CD14-positive monocyte (primary cell): ENCODE measurements at regions of chr15 and their contacts with region 1.

Region 1: DNA sequence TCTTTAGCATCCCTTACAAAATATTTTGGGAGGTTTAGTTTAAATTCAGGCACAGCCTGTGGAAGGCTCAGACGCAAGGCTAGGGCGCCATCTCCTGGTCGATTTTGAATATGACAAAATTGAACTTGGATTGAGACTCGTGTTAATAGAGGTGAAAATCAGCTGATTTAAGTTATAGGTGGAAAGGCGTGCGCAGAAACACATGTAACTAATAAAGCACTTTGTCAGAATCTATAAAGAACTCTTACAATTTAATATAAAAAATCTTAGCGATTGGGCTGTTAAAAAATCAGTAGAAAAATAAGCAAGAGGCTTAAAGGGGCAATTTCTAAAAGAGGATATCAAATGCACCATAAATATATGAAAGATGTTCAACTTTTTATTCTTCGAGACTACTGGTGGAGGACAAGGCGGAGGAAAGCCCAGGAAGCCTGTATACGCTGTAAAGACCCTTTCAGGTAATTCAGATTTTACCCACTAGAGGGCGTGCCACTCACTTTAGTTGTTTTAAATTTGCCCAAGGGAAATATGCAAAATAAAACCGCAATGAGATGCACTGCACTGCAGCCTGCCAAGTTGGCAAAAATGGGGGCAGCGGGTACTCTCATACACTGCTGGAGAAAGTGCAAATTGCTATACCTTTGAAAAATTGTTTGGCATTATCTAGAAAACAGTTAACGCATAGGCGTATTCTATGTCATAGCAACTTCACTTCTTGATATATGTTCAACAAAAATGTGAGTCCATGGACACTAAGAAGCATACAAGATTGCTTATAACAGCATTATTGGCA is 64.7 kb downstream of the SLC30A4 start:
- DNase-seq: peak; percentile 82 to 88 (median 83)
- H3K4me3 ChIP-seq: peak overlapping the region; percentile 1 to 68 (median 32)
- H3K4me3 Mint-ChIP-seq: peak overlapping the region; percentile 70 to 86
- H3K27ac ChIP-seq: peak overlapping the region in 1 of 2 donors; percentile 90
- H3K27ac Mint-ChIP-seq: peak overlapping the region; percentile 94 to 100 (median 97)
- H3K4me1 ChIP-seq: peaks cover 47 to 49% of the 10 kb centered on the region in 2 donors
- H3K4me1 Mint-ChIP-seq: peaks cover 51% of the 10 kb centered on the region
- H3K27me3 ChIP-seq: no peaks in the 10 kb centered on the region
- H3K27me3 Mint-ChIP-seq: peaks cover 12 to 21% (median 14%) of the 10 kb centered on the region in 3 donors
- CTCF ChIP-seq: peak; percentile 84

Region 2: GRCh38 chr15:44719293-44719999 is 738.4 kb before region 1 on chr15:
- intact Hi-C with region 1: loop called (anchors 5 to 10 kb)
- DNase-seq: peak; percentile 44 to 60 (median 46)
- H3K4me3 ChIP-seq: no peak overlapping the region
- H3K4me3 Mint-ChIP-seq: no peak overlapping the region
- H3K27ac ChIP-seq: peak overlapping the region; percentile 50 to 66
- H3K27ac Mint-ChIP-seq: peak overlapping the region; percentile 79 to 99 (median 91)
- H3K4me1 ChIP-seq: peaks cover 69 to 90% of the 10 kb centered on the region in 2 donors
- H3K4me1 Mint-ChIP-seq: peaks cover 84% of the 10 kb centered on the region
- H3K27me3 ChIP-seq: no peaks in the 10 kb centered on the region
- H3K27me3 Mint-ChIP-seq: peaks cover 0 to 2% (median 0%) of the 10 kb centered on the region in 3 donors
- CTCF ChIP-seq: no peak

Region 3: DNA sequence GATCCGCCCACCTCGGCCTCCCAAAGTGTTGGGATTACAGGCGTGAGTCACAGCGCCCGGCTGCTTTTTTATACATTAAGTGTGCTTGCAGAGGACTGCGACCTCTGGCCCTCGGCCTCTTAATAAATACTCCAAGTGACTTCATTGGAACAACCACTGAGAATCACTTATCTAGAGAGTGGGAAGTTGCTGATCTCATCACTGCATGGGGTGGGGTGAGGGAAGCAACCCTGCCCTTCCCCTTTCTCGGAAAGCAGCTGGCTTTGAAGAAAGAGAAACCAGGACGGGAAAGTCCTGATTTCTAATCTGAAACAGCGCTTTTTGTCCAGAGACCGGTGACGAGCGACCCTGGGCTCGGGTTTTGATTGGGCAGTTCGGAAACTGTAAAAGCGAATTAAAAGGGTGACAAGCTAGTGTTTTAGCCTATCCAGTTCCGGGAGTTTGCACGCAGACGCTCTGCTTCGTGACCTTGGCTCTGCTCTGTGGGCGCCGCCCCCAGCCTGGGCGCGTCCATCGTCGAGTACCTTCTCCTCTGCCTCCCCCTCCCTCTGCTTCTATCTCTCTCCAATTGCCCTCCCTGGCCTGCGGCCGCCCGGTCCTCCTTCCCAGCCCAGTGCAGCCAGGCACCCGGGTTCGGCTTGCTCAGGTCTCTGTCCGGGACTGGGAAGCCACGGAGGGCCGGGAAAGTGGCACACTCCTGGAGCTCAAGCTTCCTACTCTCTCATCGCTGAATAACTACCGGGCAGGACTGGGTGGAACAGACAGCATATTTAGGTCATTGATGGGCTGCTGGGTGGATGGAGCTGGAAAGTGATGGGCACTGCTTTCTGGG is 729.0 kb before region 1 on chr15:
- intact Hi-C with region 1: loop called (anchors 5 to 10 kb)
- DNase-seq: peak; percentile 99
- H3K4me3 ChIP-seq: peak overlapping the region; percentile 78 to 93 (median 80)
- H3K4me3 Mint-ChIP-seq: peak overlapping the region; percentile 96 to 98
- H3K27ac ChIP-seq: peak overlapping the region; percentile 90 to 99
- H3K27ac Mint-ChIP-seq: peak overlapping the region; percentile 99 to 100 (median 100)
- H3K4me1 ChIP-seq: peaks cover 58 to 68% of the 10 kb centered on the region in 2 donors
- H3K4me1 Mint-ChIP-seq: peaks cover 63% of the 10 kb centered on the region
- H3K27me3 ChIP-seq: no peaks in the 10 kb centered on the region
- H3K27me3 Mint-ChIP-seq: peaks cover 0 to 7% (median 0%) of the 10 kb centered on the region in 3 donors
- CTCF ChIP-seq: no peak

Region 4: GRCh38 chr15:45187894-45188830 is 269.7 kb before region 1 on chr15 and contains the start of gene SHF:
- intact Hi-C with region 1: no loop called
- DNase-seq: peak; percentile 14 to 68 (median 29)
- H3K4me3 ChIP-seq: peak within 1 kb of the TSS; percentile 33 to 76 (median 38)
- H3K4me3 Mint-ChIP-seq: peak within 1 kb of the TSS; percentile 72 to 88
- H3K27ac ChIP-seq: no peak within 1 kb of the TSS
- H3K27ac Mint-ChIP-seq: peak within 1 kb of the TSS in 4 of 7 donors; percentile 2 to 68 (median 56)
- H3K4me1 ChIP-seq: peaks cover 12 to 18% of the 10 kb centered on the region in 2 donors
- H3K4me1 Mint-ChIP-seq: peaks cover 14% of the 10 kb centered on the region
- H3K27me3 ChIP-seq: peaks cover 4 to 24% of the 10 kb centered on the region in 2 donors
- H3K27me3 Mint-ChIP-seq: peaks cover 25 to 33% (median 32%) of the 10 kb centered on the region in 3 donors
- CTCF ChIP-seq: no peak
- polyA plus RNA-seq, gene SHF: 0.58 to 0.70 (median 0.67) TPM

Region 5: DNA sequence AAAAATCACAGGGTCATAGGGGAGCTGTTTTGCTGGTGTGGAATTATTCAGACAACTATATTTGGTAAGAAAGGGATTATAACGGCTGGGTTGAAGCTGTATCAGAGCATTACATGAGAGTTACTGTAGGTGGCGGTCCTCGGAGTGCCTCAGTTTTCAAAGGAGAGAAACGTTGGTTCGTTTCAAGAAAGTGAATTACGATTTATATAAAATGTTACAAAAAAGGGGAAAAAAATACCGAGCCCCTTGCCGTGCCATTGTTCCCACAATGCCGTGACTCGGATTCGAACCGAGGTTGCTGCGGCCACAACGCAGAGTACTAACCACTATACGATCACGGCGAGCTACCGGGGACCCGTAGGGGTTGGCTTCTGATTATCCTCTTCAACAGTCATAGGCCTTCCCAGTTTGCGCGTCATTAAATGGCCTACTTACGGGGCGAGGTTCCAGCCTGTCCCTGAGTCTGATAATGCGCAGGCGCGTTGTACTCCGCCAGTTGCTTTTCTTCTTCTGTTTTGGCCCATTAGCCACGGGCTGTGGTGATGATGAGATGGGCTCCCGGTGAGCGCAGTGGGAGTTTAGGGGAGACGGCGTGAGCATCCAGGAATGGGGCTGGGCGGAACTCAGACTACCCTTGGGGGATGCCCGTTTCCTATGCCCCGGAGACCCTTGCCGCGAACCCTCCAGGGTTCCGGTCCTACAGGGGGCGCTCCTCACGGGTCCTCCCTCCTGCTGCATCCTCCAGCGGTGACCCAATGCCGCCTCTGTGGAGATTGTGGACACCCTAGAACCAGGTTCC is 259.3 kb before region 1 on chr15:
- intact Hi-C with region 1: loop called in 1 of 2 experiments (anchors 5 kb)
- DNase-seq: peak; percentile 98 to 99 (median 98)
- H3K4me3 ChIP-seq: peak overlapping the region; percentile 68 to 95 (median 91)
- H3K4me3 Mint-ChIP-seq: peak overlapping the region in 1 of 2 donors; percentile 88
- H3K27ac ChIP-seq: peak overlapping the region; percentile 97 to 99
- H3K27ac Mint-ChIP-seq: peak overlapping the region in 1 of 7 donors; percentile 82
- H3K4me1 ChIP-seq: peaks cover 34 to 40% of the 10 kb centered on the region in 2 donors
- H3K4me1 Mint-ChIP-seq: peaks cover 28% of the 10 kb centered on the region
- H3K27me3 ChIP-seq: no peaks in the 10 kb centered on the region
- H3K27me3 Mint-ChIP-seq: peaks cover 0 to 8% (median 2%) of the 10 kb centered on the region in 3 donors
- CTCF ChIP-seq: peak; percentile 67

Region 6: DNA sequence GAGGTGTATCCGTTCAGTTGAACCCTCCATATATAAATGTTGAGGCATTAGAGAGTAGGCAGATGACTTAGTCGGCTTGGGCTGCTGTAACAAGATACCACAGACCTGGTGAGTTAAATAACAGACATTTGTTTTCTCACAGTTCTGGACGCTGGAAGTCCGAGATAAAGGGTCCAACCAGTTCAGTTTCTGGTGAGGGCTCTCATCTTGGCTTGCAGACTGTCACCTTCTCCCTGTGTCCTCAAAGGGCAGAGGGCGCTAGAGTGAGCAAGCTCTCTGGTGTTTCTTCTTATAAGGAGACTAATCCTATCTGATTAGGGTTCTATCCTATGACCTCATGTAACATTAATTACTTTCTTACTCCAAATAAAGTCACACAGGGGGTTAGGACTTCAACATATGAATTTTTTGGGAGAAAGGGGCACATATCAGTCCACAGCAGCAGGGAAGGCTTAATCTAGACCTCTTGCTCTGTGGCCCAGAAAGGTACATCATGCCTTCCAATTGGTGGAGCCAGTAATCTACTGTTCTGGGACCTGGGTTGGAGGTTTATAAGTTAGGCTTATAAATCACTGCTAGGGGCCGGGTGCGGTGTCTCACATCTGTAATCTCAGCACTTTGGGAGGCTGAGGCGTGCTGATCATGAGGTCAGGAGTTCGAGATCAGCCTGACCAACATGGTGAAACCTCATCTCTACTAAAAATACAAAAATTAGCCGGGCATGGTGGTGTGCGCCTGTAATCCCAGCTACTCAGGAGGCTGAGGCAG is 232.1 kb before region 1 on chr15:
- intact Hi-C with region 1: no loop called
- DNase-seq: no peak
- H3K4me3 ChIP-seq: no peak overlapping the region
- H3K4me3 Mint-ChIP-seq: no peak overlapping the region
- H3K27ac ChIP-seq: no peak overlapping the region
- H3K27ac Mint-ChIP-seq: no peak overlapping the region
- H3K4me1 ChIP-seq: no peaks in the 10 kb centered on the region
- H3K4me1 Mint-ChIP-seq: no peaks in the 10 kb centered on the region
- H3K27me3 ChIP-seq: peaks cover 2 to 11% of the 10 kb centered on the region in 2 donors
- H3K27me3 Mint-ChIP-seq: peaks cover 6 to 14% (median 14%) of the 10 kb centered on the region in 3 donors
- CTCF ChIP-seq: no peak

Region 7: GRCh38 chr15:45424429-45424828 is 33.4 kb before region 1 on chr15:
- intact Hi-C with region 1: loop called in 1 of 2 experiments (anchors 5 kb)
- DNase-seq: no peak
- H3K4me3 ChIP-seq: no peak overlapping the region
- H3K4me3 Mint-ChIP-seq: no peak overlapping the region
- H3K27ac ChIP-seq: no peak overlapping the region
- H3K27ac Mint-ChIP-seq: peak overlapping the region in 1 of 7 donors; percentile 61
- H3K4me1 ChIP-seq: no peaks in the 10 kb centered on the region
- H3K4me1 Mint-ChIP-seq: peaks cover 3% of the 10 kb centered on the region
- H3K27me3 ChIP-seq: no peaks in the 10 kb centered on the region
- H3K27me3 Mint-ChIP-seq: peaks cover 0 to 3% (median 0%) of the 10 kb centered on the region in 3 donors
- CTCF ChIP-seq: no peak

Region 8: DNA sequence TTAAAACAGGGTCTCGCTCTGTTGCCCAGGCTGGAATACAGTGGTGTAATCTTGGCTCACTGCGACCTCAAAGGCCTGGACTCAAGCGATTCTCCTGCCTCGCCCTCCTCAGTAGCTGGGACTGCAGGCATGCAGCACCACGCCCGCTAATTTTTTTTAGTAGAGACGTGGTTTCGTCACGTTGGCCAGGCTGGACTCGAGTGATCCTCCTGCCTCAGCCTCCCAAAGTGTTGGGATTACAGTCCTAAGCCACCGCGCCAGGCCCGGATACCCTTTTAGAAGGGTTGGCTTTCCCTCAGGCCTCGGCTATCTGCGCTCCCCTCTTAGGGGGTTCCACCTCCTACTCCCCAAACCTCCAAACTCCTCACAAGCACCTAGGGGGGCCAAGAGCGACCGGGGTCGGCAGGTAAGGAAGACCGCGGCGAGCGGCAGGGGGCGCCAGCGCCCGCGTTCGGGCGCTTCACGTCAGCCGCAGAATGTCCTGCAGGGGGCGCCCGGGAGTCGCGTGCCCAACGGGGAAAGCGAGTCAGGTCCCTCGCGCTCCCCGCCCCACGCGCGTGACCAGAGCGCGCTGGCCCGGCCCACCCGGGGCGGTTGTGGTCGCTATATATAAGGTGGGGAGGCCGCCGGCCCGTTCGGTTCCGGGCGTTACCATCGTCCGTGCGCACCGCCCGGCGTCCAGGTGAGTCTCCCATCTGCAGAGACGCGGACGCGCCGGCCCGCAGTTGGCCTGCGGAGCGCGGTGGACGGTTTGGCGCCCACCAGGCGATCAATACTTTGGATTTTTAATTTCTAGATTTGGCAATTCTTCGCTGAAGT is 27.7 kb before region 1 on chr15:
- intact Hi-C with region 1: loop called (anchors 1 kb)
- DNase-seq: peak; percentile 74 to 89 (median 81)
- H3K4me3 ChIP-seq: peak overlapping the region; percentile 9 to 66 (median 17)
- H3K4me3 Mint-ChIP-seq: peak overlapping the region; percentile 75 to 82
- H3K27ac ChIP-seq: no peak overlapping the region
- H3K27ac Mint-ChIP-seq: peak overlapping the region in 2 of 7 donors; percentile 24 to 73
- H3K4me1 ChIP-seq: peaks cover 8 to 10% of the 10 kb centered on the region in 2 donors
- H3K4me1 Mint-ChIP-seq: peaks cover 7% of the 10 kb centered on the region
- H3K27me3 ChIP-seq: peaks cover 6 to 32% of the 10 kb centered on the region in 2 donors
- H3K27me3 Mint-ChIP-seq: peaks cover 29 to 36% (median 34%) of the 10 kb centered on the region in 3 donors
- CTCF ChIP-seq: peak; percentile 100

Region 9: GRCh38 chr15:45611305-45611704 is 153.5 kb after region 1 on chr15:
- intact Hi-C with region 1: loop called (anchors 2 kb)
- DNase-seq: peak in 1 of 3 donors; percentile 41
- H3K4me3 ChIP-seq: no peak overlapping the region
- H3K4me3 Mint-ChIP-seq: no peak overlapping the region
- H3K27ac ChIP-seq: no peak overlapping the region
- H3K27ac Mint-ChIP-seq: no peak overlapping the region
- H3K4me1 ChIP-seq: peaks cover 9 to 10% of the 10 kb centered on the region in 2 donors
- H3K4me1 Mint-ChIP-seq: peaks cover 10% of the 10 kb centered on the region
- H3K27me3 ChIP-seq: no peaks in the 10 kb centered on the region
- H3K27me3 Mint-ChIP-seq: peaks cover 0 to 2% (median 0%) of the 10 kb centered on the region in 3 donors
- CTCF ChIP-seq: peak; percentile 76